Activated naive CD8-positive, alpha-beta T cell treated with anti-CD3 and anti-CD28 coated beads, Interleukin-2, amount 10 ng/mL, durations not matched to agents 7 days and 5 days (primary cell): ENCODE measurements at regions of chr6 and their contacts with region 1.

Region 1: GRCh38 chr6:158270389-158271127 is 41.7 kb upstream of the TULP4 start:
- DNase-seq: peak; percentile 36
- ATAC-seq: no peak
- H3K4me3 Mint-ChIP-seq: peak overlapping the region; percentile 65
- H3K27ac Mint-ChIP-seq: peak overlapping the region; percentile 81
- H3K4me1 Mint-ChIP-seq: peaks cover 16% of the 10 kb centered on the region
- H3K27me3 Mint-ChIP-seq: no peaks in the 10 kb centered on the region

Region 2: GRCh38 chr6:158237656-158238055 is 32.9 kb before region 1 on chr6:
- POLR2A ChIA-PET with region 1: interaction called, 11 read pairs
- DNase-seq: no peak
- ATAC-seq: no peak
- H3K4me3 Mint-ChIP-seq: no peak overlapping the region
- H3K27ac Mint-ChIP-seq: no peak overlapping the region
- H3K4me1 Mint-ChIP-seq: peaks cover 23% of the 10 kb centered on the region
- H3K27me3 Mint-ChIP-seq: no peaks in the 10 kb centered on the region

Region 3: GRCh38 chr6:158255275-158255988 is 15.1 kb before region 1 on chr6:
- POLR2A ChIA-PET with region 1: no interaction called
- DNase-seq: no peak
- ATAC-seq: no peak
- H3K4me3 Mint-ChIP-seq: no peak overlapping the region
- H3K27ac Mint-ChIP-seq: no peak overlapping the region
- H3K4me1 Mint-ChIP-seq: peaks cover 16% of the 10 kb centered on the region
- H3K27me3 Mint-ChIP-seq: no peaks in the 10 kb centered on the region

Region 4: GRCh38 chr6:158286413-158286812 is 15.9 kb after region 1 on chr6:
- POLR2A ChIA-PET with region 1: interaction called, 10 read pairs
- DNase-seq: no peak
- ATAC-seq: no peak
- H3K4me3 Mint-ChIP-seq: no peak overlapping the region
- H3K27ac Mint-ChIP-seq: no peak overlapping the region
- H3K4me1 Mint-ChIP-seq: peaks cover 43% of the 10 kb centered on the region
- H3K27me3 Mint-ChIP-seq: no peaks in the 10 kb centered on the region